Lower leg skin (tissue), 4 donors: ENCODE measurements at regions of chr13 and their contacts with region 1.

Region 1: GRCh38 chr13:108895220-108895704 is 265.9 kb downstream of the MYO16 start:
- DNase-seq: no peak
- H3K4me3 ChIP-seq: no peak overlapping the region
- CTCF ChIP-seq: no peak
- POLR2A ChIP-seq: no peak

Region 2: DNA sequence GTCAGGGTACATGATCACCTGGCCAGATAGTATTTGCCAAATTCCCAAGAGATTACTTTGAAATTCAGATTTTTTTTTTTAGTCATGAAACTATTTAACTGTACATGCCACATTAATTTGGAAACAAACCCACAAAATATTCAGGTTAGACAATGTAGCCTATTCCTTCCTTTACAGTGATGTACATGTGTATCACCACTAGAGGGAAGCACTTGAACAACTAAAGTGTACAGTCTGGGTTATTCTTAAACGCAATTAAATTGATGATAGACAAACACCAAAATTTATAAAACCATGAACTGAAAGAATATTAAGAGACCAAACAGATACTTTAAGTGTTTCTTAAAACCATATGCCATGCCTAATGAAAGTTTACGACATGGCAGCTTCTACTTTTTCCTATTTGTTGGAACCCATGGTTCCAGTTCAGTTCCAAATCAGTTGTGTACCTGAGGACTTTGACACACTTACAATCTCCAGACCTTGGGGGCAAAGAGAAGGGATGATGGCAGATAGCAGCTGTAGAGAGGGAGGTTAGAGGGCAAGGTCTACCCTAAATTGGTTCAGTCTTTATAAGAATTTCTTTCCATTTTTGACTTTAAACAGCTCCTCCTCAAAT is 572.9 kb before region 1 on chr13:
- intact Hi-C with region 1: loop called (anchors 10 kb)
- DNase-seq: no peak
- H3K4me3 ChIP-seq: no peak overlapping the region
- CTCF ChIP-seq: no peak
- POLR2A ChIP-seq: no peak